MCF 10A (cell line): ENCODE measurements at regions of chr7 and their contacts with region 1.

Region 1: GRCh38 chr7:95871078-95871782 is 98.9 kb downstream of the DYNC1I1 start:
- DNase-seq: peak; percentile 66
- H3K4me3 Mint-ChIP-seq: no peak overlapping the region
- H3K27ac Mint-ChIP-seq: no peak overlapping the region
- H3K4me1 Mint-ChIP-seq: no peaks in the 10 kb centered on the region
- H3K27me3 Mint-ChIP-seq: peaks cover 31% of the 10 kb centered on the region
- CTCF ChIP-seq: peak; percentile 42

Region 2: DNA sequence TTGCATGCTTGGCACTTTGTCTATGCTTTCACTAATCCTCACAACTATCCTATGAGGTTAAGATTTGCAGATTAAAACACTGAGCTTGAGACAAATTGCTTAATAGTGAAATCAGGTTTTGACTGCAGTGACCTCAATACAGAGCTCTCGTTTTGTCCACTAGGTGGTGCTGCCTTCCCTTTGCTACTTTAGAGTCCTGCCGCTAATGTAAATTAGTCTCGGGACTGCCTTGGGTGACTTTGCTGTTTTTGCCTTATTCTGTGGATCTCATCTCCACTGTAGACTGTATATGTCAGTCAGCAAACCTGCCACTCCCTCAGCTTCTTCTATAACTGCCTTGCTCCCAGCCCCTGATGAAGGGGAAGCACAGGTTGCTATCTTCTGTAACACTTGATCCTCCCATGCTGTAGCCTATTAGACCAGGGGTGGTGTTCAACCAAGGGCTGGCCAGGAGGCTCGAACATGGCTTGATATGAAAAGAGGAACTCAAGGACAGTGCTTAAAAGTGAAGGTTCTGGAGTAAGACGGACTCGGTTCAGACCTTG is 359.4 kb before region 1 on chr7:
- CTCF ChIA-PET with region 1: no interaction called
- POLR2A ChIA-PET with region 1: no interaction called
- intact Hi-C with region 1: loop called (anchors 5 kb)
- DNase-seq: peak; percentile 78
- H3K4me3 Mint-ChIP-seq: no peak overlapping the region
- H3K27ac Mint-ChIP-seq: no peak overlapping the region
- H3K4me1 Mint-ChIP-seq: no peaks in the 10 kb centered on the region
- H3K27me3 Mint-ChIP-seq: peaks cover 29% of the 10 kb centered on the region
- CTCF ChIP-seq: peak; percentile 59

Region 3: DNA sequence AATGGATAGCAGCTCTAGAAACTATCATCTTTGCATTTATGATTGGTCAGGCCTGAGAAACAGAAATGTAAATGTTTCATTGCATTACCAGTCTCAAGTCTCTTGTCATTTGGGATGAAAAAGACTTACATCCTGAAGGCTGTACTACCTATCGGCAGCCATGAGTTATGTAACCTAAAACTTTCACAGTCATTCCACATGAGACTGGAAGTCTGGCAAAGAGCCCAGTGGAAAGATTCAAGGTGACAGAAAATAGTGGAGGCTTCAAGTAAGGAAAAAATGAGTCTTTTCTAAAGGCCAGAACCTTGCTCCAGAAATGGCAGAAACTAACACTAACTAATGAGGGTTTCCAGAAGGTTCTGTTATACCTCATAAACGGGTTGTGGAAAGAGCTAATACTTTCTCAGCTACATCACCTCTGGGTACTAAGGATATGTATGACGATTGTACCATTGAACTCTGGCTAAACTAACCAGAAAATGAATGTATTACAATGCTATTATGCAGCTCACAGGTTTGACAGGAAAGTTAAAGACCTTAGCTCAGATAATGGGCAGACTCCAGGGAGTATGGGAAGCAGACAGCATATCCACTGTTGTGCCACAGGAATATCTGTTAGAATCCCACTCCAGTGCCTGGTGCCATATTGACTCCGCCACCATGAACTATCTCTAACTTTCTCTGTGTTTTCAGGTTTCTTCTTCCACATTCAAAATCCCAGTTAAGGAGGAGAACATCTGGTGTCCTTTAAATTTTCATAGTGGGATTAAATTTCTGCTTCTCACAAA is 140.5 kb before region 1 on chr7:
- CTCF ChIA-PET with region 1: interaction called, 151 read pairs
- POLR2A ChIA-PET with region 1: no interaction called
- intact Hi-C with region 1: no loop called
- DNase-seq: peak; percentile 15
- H3K4me3 Mint-ChIP-seq: no peak overlapping the region
- H3K27ac Mint-ChIP-seq: no peak overlapping the region
- H3K4me1 Mint-ChIP-seq: no peaks in the 10 kb centered on the region
- H3K27me3 Mint-ChIP-seq: peaks cover 73% of the 10 kb centered on the region
- CTCF ChIP-seq: no peak

Region 4: DNA sequence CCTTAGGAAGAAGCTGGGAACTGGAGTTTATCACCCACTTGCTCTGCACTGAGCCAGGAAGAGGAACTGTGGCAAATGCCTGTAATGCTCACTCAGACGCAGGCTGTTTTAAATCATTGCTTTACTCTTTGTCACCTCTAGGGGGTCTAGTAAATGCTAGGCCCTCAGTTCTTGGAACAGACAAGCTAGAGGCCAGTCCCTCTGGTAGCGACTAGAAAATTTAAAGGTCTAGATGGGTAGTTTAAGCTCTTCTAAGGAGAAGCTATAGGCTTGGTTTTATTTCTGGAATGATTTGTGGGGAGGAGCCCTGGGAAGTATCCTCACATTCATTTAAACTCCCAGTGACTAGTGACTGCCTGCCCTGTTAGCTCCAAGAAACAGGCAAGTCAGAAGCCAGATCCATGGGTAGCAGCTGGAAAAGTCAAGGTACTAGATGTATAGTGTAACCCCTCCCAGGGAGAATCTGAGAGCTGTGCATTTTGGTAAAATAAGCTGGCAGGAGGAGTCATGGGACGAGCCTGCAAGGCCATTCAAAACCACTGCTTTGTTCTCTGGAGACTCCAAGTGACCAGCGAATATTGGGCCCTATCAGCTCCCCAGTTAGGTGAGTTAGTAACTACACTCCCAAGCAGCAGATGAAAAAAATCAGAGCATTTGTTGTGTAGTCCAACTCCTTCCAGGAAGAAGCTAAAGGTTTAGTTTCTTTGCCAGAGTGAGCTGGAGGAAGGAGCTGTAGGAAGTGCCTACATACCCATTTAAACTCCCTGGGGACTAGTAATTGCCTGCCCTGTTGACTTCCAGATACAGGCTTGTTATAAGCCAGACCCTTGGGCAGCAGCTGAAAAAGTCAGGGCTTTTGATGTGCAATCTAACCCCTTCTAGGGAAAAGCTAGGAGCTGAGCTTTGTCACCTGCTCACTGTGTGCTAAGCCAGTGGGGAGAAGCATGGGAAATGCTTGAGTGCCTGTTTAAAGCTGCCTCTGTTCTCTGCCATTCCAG is 30.0 kb before region 1 on chr7:
- CTCF ChIA-PET with region 1: interaction called, 17 read pairs
- POLR2A ChIA-PET with region 1: no interaction called
- intact Hi-C with region 1: no loop called
- DNase-seq: peak; percentile 31
- H3K4me3 Mint-ChIP-seq: no peak overlapping the region
- H3K27ac Mint-ChIP-seq: no peak overlapping the region
- H3K4me1 Mint-ChIP-seq: no peaks in the 10 kb centered on the region
- H3K27me3 Mint-ChIP-seq: peaks cover 24% of the 10 kb centered on the region
- CTCF ChIP-seq: peak; percentile 22

Region 5: GRCh38 chr7:95886501-95887090 is 15.4 kb after region 1 on chr7:
- CTCF ChIA-PET with region 1: interaction called, 18 read pairs
- POLR2A ChIA-PET with region 1: no interaction called
- intact Hi-C with region 1: no loop called
- DNase-seq: no peak
- H3K4me3 Mint-ChIP-seq: no peak overlapping the region
- H3K27ac Mint-ChIP-seq: no peak overlapping the region
- H3K4me1 Mint-ChIP-seq: no peaks in the 10 kb centered on the region
- H3K27me3 Mint-ChIP-seq: peaks cover 92% of the 10 kb centered on the region
- CTCF ChIP-seq: no peak

Region 6: GRCh38 chr7:96017877-96018276 is 146.6 kb after region 1 on chr7:
- CTCF ChIA-PET with region 1: no interaction called
- POLR2A ChIA-PET with region 1: no interaction called
- intact Hi-C with region 1: no loop called
- DNase-seq: no peak
- H3K4me3 Mint-ChIP-seq: no peak overlapping the region
- H3K27ac Mint-ChIP-seq: no peak overlapping the region
- H3K4me1 Mint-ChIP-seq: no peaks in the 10 kb centered on the region
- H3K27me3 Mint-ChIP-seq: peaks cover 94% of the 10 kb centered on the region
- CTCF ChIP-seq: no peak